ENCODE measurements at regions of chr6 and their contacts with region 1.

Region 1: DNA sequence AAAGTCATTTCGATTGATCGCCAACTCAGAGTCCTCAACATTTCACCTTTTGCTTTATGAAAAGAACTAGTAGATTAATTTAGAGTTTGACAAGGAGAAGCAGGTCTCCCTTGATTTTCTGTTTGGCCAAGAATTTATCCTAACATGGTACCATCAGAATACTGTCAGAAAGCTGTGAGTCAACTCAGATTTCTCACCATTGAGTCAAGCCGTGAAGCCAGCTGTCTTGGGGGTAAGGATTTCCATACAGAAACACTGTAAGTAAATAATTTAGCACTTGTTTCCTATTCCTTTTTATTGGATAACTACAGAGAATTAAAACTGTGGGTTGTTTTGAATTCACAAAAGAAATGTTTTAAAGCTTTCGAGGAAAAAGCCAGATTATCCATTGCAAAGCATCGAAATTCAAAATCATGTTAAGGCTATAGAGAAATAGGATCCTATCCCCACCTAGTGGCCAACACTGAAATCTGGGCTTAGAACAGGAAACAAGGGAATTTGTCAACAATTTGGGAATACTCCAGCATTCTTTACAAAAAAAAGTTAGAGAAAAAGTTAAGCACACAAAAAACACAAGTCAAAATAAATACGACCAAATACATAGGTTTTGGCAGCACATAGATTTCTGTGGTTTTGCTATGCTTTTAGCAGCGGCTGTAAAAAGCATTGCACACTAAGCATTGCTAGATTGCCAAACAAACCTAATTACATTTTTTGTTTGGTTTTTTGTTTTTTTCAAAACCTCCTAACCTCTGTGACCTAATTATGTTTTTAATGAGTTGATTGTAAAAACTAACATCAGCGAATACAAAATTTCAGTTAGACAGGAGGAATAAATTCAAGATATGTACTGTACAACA is 44.2 kb downstream of the COL11A2 start:
- DNase-seq: peak; percentile 64
- H3K4me3 ChIP-seq: no peak overlapping the region
- H3K27ac ChIP-seq: no peak overlapping the region
- H3K4me1 ChIP-seq: peaks cover 4% of the 10 kb centered on the region
- H3K27me3 ChIP-seq: peaks cover 12% of the 10 kb centered on the region
- CTCF ChIP-seq: peak; percentile 86

Region 2: GRCh38 chr6:32894080-32895005 is 253.7 kb before region 1 on chr6:
- CTCF ChIA-PET with region 1: no interaction called
- POLR2A ChIA-PET with region 1: no interaction called
- intact Hi-C with region 1: loop called (anchors 10 kb)
- DNase-seq: peak; percentile 96
- H3K4me3 ChIP-seq: peak overlapping the region; percentile 87
- H3K27ac ChIP-seq: peak overlapping the region; percentile 86
- H3K4me1 ChIP-seq: peaks cover 8% of the 10 kb centered on the region
- H3K27me3 ChIP-seq: no peaks in the 10 kb centered on the region
- CTCF ChIP-seq: 0 out of 2 replicates have a peak, but pooled peaks have one; percentile 12

Region 3: GRCh38 chr6:33014841-33015634 is 133.0 kb before region 1 on chr6:
- CTCF ChIA-PET with region 1: interaction called, 5 read pairs
- POLR2A ChIA-PET with region 1: no interaction called
- intact Hi-C with region 1: loop called (anchors 10 kb)
- DNase-seq: peak; percentile 88
- H3K4me3 ChIP-seq: no peak overlapping the region
- H3K27ac ChIP-seq: no peak overlapping the region
- H3K4me1 ChIP-seq: no peaks in the 10 kb centered on the region
- H3K27me3 ChIP-seq: peaks cover 24% of the 10 kb centered on the region
- CTCF ChIP-seq: peak; percentile 76

Region 4: GRCh38 chr6:33161354-33162331 is 13.6 kb after region 1 on chr6:
- CTCF ChIA-PET with region 1: interaction called, 16 read pairs
- POLR2A ChIA-PET with region 1: no interaction called
- intact Hi-C with region 1: no loop called
- DNase-seq: peak; percentile 81
- H3K4me3 ChIP-seq: peak overlapping the region; percentile 54
- H3K27ac ChIP-seq: peak overlapping the region; percentile 40
- H3K4me1 ChIP-seq: peaks cover 7% of the 10 kb centered on the region
- H3K27me3 ChIP-seq: no peaks in the 10 kb centered on the region
- CTCF ChIP-seq: peak; percentile 96